Sigmoid colon (tissue), 7 donors: ENCODE measurements at regions of chr19 and their contacts with region 1.

Region 1: GRCh38 chr19:6393074-6393983 is at the start of gene GTF2F1:
- DNase-seq: peak; percentile 98
- H3K4me3 ChIP-seq: peak within 1 kb of the TSS; percentile 69 to 93 (median 80)
- H3K27ac ChIP-seq: peak within 1 kb of the TSS; percentile 88 to 97 (median 95)
- H3K4me1 ChIP-seq: peaks cover 0 to 17% (median 12%) of the 10 kb centered on the region in 4 donors
- H3K27me3 ChIP-seq: no peaks in the 10 kb centered on the region
- CTCF ChIP-seq: no peak
- EP300 ChIP-seq: peak in 1 of 4 donors; percentile 30
- POLR2A ChIP-seq: peak in 1 of 2 donors; percentile 41
- total RNA-seq, gene GTF2F1: 34.9 to 48.2 (median 37.9) TPM

Region 2: DNA sequence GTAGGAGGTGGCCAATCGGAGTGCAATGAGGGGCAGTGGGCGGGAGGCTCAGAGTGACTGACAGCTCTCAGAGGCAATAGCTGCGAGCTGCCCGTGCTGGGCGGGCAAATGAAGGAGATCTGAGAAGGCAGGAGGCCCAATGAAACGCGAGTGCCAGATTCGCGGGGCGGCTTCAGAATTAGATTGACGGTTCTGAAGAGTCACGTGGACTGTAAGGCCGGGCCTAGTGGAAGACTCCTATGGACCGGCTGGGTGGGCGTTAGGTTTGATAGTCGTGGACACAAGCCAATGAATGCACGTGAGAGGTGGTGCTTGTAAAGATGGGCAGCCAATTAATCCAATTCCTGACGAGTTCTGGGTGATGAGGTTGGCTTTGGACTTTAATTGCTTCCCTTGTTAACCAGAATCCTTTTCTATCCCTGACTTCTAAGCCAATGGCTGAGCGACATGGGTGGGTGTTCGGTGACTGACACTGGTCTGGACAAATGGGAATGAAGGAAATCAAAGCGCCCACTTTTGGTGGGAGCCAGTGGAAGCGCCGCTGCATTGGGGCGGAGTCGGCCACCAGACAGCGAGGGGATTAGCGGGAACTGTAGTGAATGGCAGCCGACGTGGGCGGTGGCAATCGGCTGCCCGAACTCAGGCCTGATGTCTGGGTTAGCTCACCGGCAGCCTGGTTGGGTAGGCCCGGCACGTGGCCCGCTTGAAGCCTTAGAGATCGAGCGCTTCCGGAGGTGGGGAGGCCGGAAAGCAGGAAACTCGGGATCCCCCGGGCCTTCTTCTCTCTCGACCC is 31.8 kb after region 1 on chr19:
- intact Hi-C with region 1: loop called (anchors 1 kb)
- DNase-seq: peak; percentile 100
- H3K4me3 ChIP-seq: peak overlapping the region in 2 of 4 donors; percentile 84 to 85
- H3K27ac ChIP-seq: peak overlapping the region; percentile 80 to 89 (median 87)
- H3K4me1 ChIP-seq: peaks cover 4 to 38% (median 30%) of the 10 kb centered on the region in 4 donors
- H3K27me3 ChIP-seq: no peaks in the 10 kb centered on the region
- CTCF ChIP-seq: no peak
- EP300 ChIP-seq: no peak
- POLR2A ChIP-seq: no peak